BJ (cell line): ENCODE measurements at regions of chr17 and their contacts with region 1.

Region 1: GRCh38 chr17:79082311-79083190 is 7.9 kb downstream of the ENGASE start:
- DNase-seq: no peak
- H3K4me3 ChIP-seq: no peak overlapping the region
- H3K27me3 ChIP-seq: no peaks in the 10 kb centered on the region
- CTCF ChIP-seq: peak; percentile 90

Region 2: DNA sequence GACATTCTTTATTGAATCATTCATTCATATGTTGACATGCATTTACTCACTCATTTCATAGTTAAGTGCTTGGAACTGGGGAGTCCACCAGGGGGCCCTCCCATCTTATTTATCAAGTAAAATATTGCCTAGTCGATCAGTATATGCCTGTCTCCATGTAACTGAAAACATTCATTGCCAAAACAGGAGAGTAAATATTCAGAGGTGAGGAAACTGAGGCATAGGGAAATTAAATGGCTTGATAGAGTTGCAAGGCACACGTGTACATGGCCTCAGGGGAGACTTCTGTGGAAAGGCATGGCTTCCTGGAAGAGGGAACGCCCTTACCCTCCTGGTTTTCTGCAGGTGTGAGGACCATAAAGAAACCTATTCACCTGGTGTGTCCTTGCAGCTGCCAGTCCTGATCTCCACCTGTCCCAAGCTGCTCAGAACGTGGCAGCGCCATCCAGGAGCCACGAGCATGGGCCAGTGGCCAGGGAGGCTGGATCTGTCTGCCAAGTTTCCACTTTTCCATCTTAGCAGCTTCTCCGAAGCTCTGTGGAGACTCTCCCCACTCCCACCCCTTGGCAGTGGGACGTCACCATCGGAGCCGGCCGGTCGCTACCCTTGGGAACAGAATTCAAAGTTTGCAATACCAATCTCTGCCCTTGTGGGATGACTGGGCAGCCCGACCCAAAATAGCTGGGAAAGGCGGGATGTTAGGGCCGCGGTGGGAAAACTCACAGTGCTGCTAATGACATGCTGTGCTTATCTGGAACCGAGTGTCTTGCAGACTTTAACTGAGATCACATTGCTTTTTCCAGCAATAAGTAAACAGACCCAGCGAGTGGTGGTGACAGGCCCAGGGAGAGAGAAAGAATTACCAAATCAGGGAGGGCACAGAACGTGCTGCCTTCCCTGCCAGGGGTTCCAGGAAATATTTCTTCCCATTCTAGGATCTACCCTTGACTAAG is 62.6 kb before region 1 on chr17:
- CTCF ChIA-PET with region 1: interaction called, 51 read pairs
- POLR2A ChIA-PET with region 1: no interaction called
- DNase-seq: no peak
- H3K4me3 ChIP-seq: no peak overlapping the region
- H3K27me3 ChIP-seq: no peaks in the 10 kb centered on the region
- CTCF ChIP-seq: peak; percentile 77

Region 3: DNA sequence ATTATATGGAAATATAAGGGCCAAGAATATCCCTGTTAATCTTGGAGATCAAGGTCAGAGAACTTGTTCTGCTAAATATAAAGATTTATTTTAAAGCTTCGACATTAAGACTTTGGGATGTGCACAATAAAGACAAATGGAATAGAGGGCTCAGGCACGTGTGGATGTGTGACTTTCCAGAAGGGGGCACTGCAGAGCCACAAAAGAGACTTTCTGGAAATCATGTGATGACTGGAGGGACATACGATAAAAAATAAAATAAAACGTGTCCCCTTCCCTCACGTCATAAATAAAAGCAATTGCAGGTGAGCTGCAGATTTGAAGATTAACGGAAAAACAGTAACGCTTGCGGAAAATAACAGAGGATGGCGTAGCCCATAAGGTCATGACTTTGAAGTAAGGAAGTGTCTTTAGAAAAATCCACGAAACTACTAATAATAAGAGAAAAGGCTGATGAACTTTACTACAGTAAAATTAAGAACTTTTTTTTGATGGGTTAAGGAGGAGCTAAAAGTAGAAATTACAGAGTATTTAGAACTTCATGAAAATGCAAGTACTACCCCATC is 17.4 kb before region 1 on chr17:
- CTCF ChIA-PET with region 1: interaction called, 31 read pairs
- POLR2A ChIA-PET with region 1: no interaction called
- DNase-seq: no peak
- H3K4me3 ChIP-seq: no peak overlapping the region
- H3K27me3 ChIP-seq: peaks cover 3% of the 10 kb centered on the region
- CTCF ChIP-seq: peak; percentile 51